ENCODE measurements at regions of chr15 and their contacts with region 1.

Region 1: DNA sequence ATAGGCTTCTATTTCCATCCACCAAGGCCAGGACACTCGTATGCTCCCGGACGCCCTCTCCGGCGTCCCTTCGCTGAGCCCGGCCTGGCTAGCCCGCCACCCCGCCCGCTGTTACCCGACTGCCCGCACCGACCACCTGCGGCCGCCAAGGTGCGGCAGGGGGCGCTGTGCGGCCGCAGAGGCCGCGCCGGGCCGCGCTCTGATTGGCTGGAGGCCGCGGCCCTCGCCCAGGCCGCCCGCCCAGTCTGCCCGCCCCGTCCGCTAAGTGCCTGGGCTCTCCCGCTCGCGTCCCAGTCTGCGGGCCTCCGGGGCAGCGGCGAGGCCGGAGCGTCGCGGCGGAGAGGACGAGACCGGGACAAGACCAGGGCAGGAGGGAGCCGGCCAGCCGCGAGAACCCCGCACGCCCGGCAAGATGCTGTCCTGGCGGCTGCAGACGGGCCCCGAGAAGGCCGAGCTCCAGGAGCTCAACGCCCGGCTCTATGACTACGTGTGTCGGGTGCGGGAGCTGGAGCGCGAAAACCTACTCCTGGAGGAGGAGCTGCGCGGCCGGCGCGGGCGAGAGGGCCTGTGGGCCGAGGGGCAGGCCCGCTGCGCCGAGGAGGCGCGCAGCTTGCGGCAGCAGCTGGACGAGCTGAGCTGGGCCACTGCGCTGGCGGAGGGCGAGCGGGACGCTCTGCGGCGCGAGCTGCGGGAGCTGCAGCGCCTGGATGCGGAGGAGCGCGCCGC is at the start of gene SYNM:
- DNase-seq: peak in 3 of 5 donors; percentile 13 to 20 (median 16)
- H3K4me3 ChIP-seq: peak within 1 kb of the TSS in 1 of 2 donors; percentile 9
- H3K4me3 Mint-ChIP-seq: peak within 1 kb of the TSS; percentile 54 to 81 (median 60)
- H3K27ac ChIP-seq: no peak within 1 kb of the TSS
- H3K27ac Mint-ChIP-seq: peak within 1 kb of the TSS in 2 of 7 donors; percentile 21 to 65
- H3K4me1 ChIP-seq: peaks cover 10% of the 10 kb centered on the region
- H3K4me1 Mint-ChIP-seq: peaks cover 8 to 37% (median 19%) of the 10 kb centered on the region in 4 donors
- H3K27me3 ChIP-seq: peaks cover 13% of the 10 kb centered on the region
- H3K27me3 Mint-ChIP-seq: peaks cover 20 to 32% of the 10 kb centered on the region in 2 donors
- total RNA-seq, gene SYNM: 13.7 to 14.2 TPM

Region 2: GRCh38 chr15:98904544-98904943 is 200.4 kb before region 1 on chr15:
- CTCF ChIA-PET with region 1: no interaction called
- POLR2A ChIA-PET with region 1: no interaction called
- intact Hi-C with region 1: no loop called
- DNase-seq: peak in 2 of 5 donors; percentile 2 to 5
- H3K4me3 ChIP-seq: no peak overlapping the region
- H3K4me3 Mint-ChIP-seq: no peak overlapping the region
- H3K27ac ChIP-seq: no peak overlapping the region
- H3K27ac Mint-ChIP-seq: no peak overlapping the region
- H3K4me1 ChIP-seq: no peaks in the 10 kb centered on the region
- H3K4me1 Mint-ChIP-seq: peaks cover 0 to 6% (median 5%) of the 10 kb centered on the region in 4 donors
- H3K27me3 ChIP-seq: no peaks in the 10 kb centered on the region
- H3K27me3 Mint-ChIP-seq: peaks cover 1 to 4% of the 10 kb centered on the region in 2 donors

Region 3: DNA sequence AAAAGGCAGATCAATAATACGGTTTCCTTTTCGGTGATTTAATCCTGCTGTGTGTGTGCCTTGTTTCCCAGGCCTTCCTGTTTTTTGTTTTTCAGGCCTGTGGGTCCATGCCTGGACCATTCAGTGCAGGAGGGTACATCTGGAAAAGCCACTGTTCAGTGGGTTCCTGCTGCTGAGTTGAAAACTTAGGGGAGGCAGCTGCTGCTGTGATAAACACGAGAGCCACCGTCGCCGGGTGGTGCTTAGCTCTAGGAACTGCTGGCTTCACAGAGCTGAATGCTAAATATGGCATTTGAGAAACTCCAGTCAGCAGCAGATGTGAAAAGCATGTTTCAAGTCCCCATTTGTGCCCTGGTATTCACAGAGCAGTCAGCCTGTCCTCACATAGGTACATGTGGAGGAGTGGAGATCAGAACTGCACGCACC is 43.9 kb after region 1 on chr15:
- CTCF ChIA-PET with region 1: no interaction called
- POLR2A ChIA-PET with region 1: no interaction called
- intact Hi-C with region 1: no loop called
- DNase-seq: no peak
- H3K4me3 ChIP-seq: no peak overlapping the region
- H3K4me3 Mint-ChIP-seq: no peak overlapping the region
- H3K27ac ChIP-seq: no peak overlapping the region
- H3K27ac Mint-ChIP-seq: no peak overlapping the region
- H3K4me1 ChIP-seq: no peaks in the 10 kb centered on the region
- H3K4me1 Mint-ChIP-seq: no peaks in the 10 kb centered on the region
- H3K27me3 ChIP-seq: no peaks in the 10 kb centered on the region
- H3K27me3 Mint-ChIP-seq: peaks cover 0 to 2% of the 10 kb centered on the region in 2 donors

Region 4: GRCh38 chr15:99207672-99208071 is 102.7 kb after region 1 on chr15:
- CTCF ChIA-PET with region 1: interaction called, 27 read pairs
- POLR2A ChIA-PET with region 1: interaction called, 3 read pairs
- intact Hi-C with region 1: no loop called
- DNase-seq: no peak
- H3K4me3 ChIP-seq: no peak overlapping the region
- H3K4me3 Mint-ChIP-seq: no peak overlapping the region
- H3K27ac ChIP-seq: no peak overlapping the region
- H3K27ac Mint-ChIP-seq: no peak overlapping the region
- H3K4me1 ChIP-seq: no peaks in the 10 kb centered on the region
- H3K4me1 Mint-ChIP-seq: no peaks in the 10 kb centered on the region
- H3K27me3 ChIP-seq: no peaks in the 10 kb centered on the region
- H3K27me3 Mint-ChIP-seq: peaks cover 11% of the 10 kb centered on the region in 2 donors

Region 5: DNA sequence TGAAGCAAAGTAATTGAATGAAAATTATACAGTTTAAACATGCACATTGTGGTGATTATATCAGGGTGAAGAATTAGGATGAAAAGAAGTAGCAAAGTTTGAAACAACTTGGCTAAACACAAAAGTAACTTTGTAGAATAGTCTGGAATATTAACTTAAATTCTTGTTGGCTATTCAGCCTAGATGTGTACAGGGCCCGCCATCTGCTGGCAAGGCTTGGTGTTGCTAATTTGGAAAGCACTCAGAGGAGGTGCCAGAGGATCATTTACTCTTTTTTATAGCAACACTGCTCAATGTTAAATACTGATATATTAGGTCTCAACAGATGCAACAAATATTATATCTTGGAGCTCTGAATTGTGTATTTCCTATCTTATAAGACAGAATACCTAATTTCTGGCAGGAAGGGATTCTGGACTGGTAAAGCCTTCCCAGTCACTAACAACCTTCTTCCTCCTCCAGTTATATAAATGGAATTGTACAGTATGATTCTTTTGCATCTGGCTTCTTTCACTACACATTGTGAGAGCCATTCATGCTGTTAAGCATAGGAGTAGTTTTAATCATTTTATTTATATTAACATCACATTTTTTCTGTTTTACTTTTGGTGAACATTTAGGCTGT is 108.3 kb after region 1 on chr15:
- CTCF ChIA-PET with region 1: interaction called, 27 read pairs
- POLR2A ChIA-PET with region 1: interaction called, 3 read pairs
- intact Hi-C with region 1: loop called (anchors 1 kb)
- DNase-seq: peak; percentile 22 to 61 (median 37)
- H3K4me3 ChIP-seq: no peak overlapping the region
- H3K4me3 Mint-ChIP-seq: no peak overlapping the region
- H3K27ac ChIP-seq: no peak overlapping the region
- H3K27ac Mint-ChIP-seq: no peak overlapping the region
- H3K4me1 ChIP-seq: no peaks in the 10 kb centered on the region
- H3K4me1 Mint-ChIP-seq: no peaks in the 10 kb centered on the region
- H3K27me3 ChIP-seq: no peaks in the 10 kb centered on the region
- H3K27me3 Mint-ChIP-seq: peaks cover 4 to 10% of the 10 kb centered on the region in 2 donors